IMR-90 (cell line): ENCODE measurements at regions of chr10 and their contacts with region 1.

Region 1: DNA sequence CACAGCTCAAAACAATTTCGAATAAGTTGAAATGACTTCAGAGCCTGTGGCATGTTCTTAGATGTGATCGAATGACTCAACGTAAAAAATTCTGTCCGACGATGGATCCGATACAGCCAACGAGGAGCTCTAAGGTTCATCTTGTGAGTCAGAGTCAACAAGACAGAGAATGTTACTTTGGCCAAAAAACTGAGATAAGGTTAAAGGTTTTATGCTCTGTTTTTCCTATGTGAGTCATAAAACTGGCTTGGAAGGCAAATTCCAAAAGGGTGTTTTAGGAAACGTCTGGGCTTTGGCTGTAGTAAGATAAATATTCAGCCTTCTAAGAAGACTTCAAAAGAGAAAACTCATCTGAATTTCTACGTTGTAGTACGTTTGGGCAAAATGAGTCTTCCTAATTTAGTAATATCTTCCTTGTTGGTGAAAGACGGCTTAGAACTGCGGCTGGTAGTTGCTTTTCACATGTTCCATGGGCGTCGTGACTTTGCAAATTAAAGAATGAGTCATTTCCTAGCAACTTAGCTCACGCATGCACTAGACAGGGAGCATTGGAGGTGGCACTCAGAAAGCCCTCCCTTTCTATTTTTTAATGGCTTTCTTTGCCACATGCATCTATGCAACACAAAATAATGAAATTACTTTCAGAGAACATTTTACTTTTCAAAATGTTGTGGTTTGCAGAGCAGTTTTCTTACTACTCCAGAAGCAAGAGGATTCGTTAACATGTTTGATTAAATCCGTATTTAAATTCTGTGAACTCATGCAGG is 28.2 kb downstream of the PFKP start:
- DNase-seq: peak; percentile 100
- ATAC-seq: peak; percentile 74
- H3K4me3 ChIP-seq: no peak overlapping the region
- H3K27ac ChIP-seq: peak overlapping the region; percentile 98
- H3K4me1 ChIP-seq: peaks cover 51% of the 10 kb centered on the region
- H3K27me3 ChIP-seq: no peaks in the 10 kb centered on the region
- CTCF ChIP-seq: no peak
- POLR2A ChIP-seq: no peak
- RAD21 ChIP-seq: no peak

Region 2: DNA sequence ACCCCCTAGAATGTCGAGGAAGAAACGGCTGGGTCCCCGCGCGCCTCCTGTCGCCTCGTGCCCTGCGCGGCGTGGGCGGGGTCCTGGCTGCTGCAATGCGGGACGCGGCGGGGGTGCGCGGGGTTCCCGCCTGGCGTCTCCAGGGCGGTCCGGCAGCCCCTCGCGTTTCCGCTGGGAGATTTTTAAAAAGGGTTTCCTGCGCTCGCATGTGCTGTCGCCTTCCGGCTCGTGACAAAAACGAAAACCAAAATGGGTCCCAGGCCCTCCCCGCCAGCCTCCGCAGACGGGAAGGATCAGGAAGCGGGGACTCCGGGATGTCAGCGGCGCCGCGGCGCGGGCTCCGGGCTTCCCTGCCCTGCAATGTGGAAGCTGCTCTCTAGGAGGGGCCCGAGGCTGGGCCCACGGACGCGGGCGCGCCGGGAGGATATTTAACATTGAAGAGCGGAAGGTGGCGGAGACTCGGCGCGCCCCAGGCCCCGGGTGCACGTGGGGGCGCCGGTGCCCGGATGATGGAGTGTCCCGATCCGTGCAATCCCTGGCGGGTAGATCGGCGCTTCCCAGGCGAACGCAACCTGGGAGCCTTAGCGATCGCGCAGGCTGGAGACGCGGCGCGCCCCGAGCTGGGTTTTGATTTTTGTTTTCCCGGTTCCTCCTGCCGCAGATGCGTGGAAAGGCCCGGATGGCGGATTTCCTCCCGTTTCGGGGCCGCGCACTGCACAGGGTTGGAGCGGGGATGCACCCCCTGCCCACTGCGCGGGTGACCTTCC is 27.2 kb before region 1 on chr10:
- CTCF ChIA-PET with region 1: no interaction called
- POLR2A ChIA-PET with region 1: interaction called, 3 read pairs
- dilution Hi-C with region 1: no loop called
- in situ Hi-C with region 1: no loop called
- intact Hi-C with region 1: loop called (anchors 2 kb)
- DNase-seq: peak; percentile 54
- ATAC-seq: peak; percentile 24
- H3K4me3 ChIP-seq: peak overlapping the region; percentile 100
- H3K27ac ChIP-seq: peak overlapping the region; percentile 94
- H3K4me1 ChIP-seq: peaks cover 21% of the 10 kb centered on the region
- H3K27me3 ChIP-seq: no peaks in the 10 kb centered on the region
- CTCF ChIP-seq: peak; percentile 36
- POLR2A ChIP-seq: no peak
- RAD21 ChIP-seq: peak; percentile 33

Region 3: GRCh38 chr10:3107426-3107961 is 11.9 kb after region 1 on chr10:
- CTCF ChIA-PET with region 1: no interaction called
- POLR2A ChIA-PET with region 1: no interaction called
- dilution Hi-C with region 1: no loop called
- in situ Hi-C with region 1: no loop called
- intact Hi-C with region 1: loop called (anchors 1 kb)
- DNase-seq: peak; percentile 98
- ATAC-seq: peak; percentile 90
- H3K4me3 ChIP-seq: no peak overlapping the region
- H3K27ac ChIP-seq: peak overlapping the region; percentile 77
- H3K4me1 ChIP-seq: peaks cover 11% of the 10 kb centered on the region
- H3K27me3 ChIP-seq: no peaks in the 10 kb centered on the region
- CTCF ChIP-seq: no peak
- POLR2A ChIP-seq: 0 out of 2 replicates have a peak, but pooled peaks have one; percentile 16
- RAD21 ChIP-seq: no peak